ENCODE measurements at regions of chr10 and their contacts with region 1.

Region 1: GRCh38 chr10:5623081-5623748 is 43.2 kb downstream of the ASB13 start:
- DNase-seq: peak; percentile 91 to 94
- H3K4me3 ChIP-seq: no peak overlapping the region
- H3K27ac ChIP-seq: no peak overlapping the region
- H3K4me1 ChIP-seq: peaks cover 0 to 5% of the 10 kb centered on the region in 2 donors
- H3K27me3 ChIP-seq: no peaks in the 10 kb centered on the region
- CTCF ChIP-seq: peak; percentile 73 to 96 (median 92)
- POLR2A ChIP-seq: no peak

Region 2: DNA sequence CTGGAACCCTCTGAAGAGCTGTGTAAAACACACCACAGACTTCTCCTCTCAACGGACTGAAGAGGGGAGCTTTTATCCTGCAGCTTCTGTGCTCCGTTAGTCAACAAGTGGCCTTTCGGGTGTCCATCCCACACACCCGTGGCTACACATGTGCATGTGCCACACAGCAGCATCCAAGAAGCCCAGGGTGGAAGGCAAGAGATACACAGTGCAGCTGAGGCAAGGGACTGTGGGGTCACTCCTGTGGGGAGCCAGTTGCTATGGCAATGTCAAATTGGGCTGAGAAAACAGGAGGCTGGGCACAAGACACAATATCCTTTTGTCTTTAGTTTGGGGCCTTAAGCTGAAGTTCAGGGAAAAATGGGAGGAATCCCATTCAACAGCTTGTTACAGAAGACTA is 182.1 kb before region 1 on chr10:
- intact Hi-C with region 1: loop called (anchors 2 kb)
- DNase-seq: no peak
- H3K4me3 ChIP-seq: no peak overlapping the region
- H3K27ac ChIP-seq: no peak overlapping the region
- H3K4me1 ChIP-seq: peaks cover 8 to 17% of the 10 kb centered on the region in 2 donors
- H3K27me3 ChIP-seq: no peaks in the 10 kb centered on the region
- CTCF ChIP-seq: no peak
- POLR2A ChIP-seq: no peak

Region 3: GRCh38 chr10:5446390-5446926 is 176.8 kb before region 1 on chr10:
- intact Hi-C with region 1: loop called (anchors 2 kb)
- DNase-seq: peak; percentile 98
- H3K4me3 ChIP-seq: peak overlapping the region in 2 of 3 donors; percentile 40 to 52
- H3K27ac ChIP-seq: peak overlapping the region; percentile 48 to 80 (median 67)
- H3K4me1 ChIP-seq: peaks cover 19 to 32% of the 10 kb centered on the region in 2 donors
- H3K27me3 ChIP-seq: no peaks in the 10 kb centered on the region
- CTCF ChIP-seq: no peak
- POLR2A ChIP-seq: peak; percentile 93 to 100